Activated B cell treated with CpG ODN at 0.5 μM for 24 hours (primary cell): ENCODE measurements at regions of chr10 and their contacts with region 1.

Region 1: GRCh38 chr10:91251430-91252056 is 31.1 kb downstream of the PCGF5 start:
- DNase-seq: no peak
- ATAC-seq: peak; percentile 82
- H3K4me3 Mint-ChIP-seq: no peak overlapping the region
- H3K27ac Mint-ChIP-seq: no peak overlapping the region
- H3K4me1 Mint-ChIP-seq: peaks cover 4% of the 10 kb centered on the region
- H3K27me3 Mint-ChIP-seq: no peaks in the 10 kb centered on the region
- CTCF ChIP-seq: peak; percentile 97

Region 2: GRCh38 chr10:90751107-90751997 is 500.2 kb before region 1 on chr10:
- CTCF ChIA-PET with region 1: no interaction called
- POLR2A ChIA-PET with region 1: no interaction called
- intact Hi-C with region 1: loop called (anchors 2 kb)
- DNase-seq: no peak
- ATAC-seq: peak; percentile 54
- H3K4me3 Mint-ChIP-seq: no peak overlapping the region
- H3K27ac Mint-ChIP-seq: no peak overlapping the region
- H3K4me1 Mint-ChIP-seq: peaks cover 5% of the 10 kb centered on the region
- H3K27me3 Mint-ChIP-seq: peaks cover 13% of the 10 kb centered on the region
- CTCF ChIP-seq: no peak

Region 3: GRCh38 chr10:90885176-90885575 is 366.4 kb before region 1 on chr10:
- CTCF ChIA-PET with region 1: interaction called, 12 read pairs
- POLR2A ChIA-PET with region 1: no interaction called
- intact Hi-C with region 1: loop called (anchors 1 kb)
- DNase-seq: no peak
- ATAC-seq: no peak
- H3K4me3 Mint-ChIP-seq: no peak overlapping the region
- H3K27ac Mint-ChIP-seq: no peak overlapping the region
- H3K4me1 Mint-ChIP-seq: no peaks in the 10 kb centered on the region
- H3K27me3 Mint-ChIP-seq: no peaks in the 10 kb centered on the region
- CTCF ChIP-seq: no peak

Region 4: GRCh38 chr10:90999512-91000172 is 251.9 kb before region 1 on chr10:
- CTCF ChIA-PET with region 1: interaction called, 14 read pairs
- POLR2A ChIA-PET with region 1: interaction called, 3 read pairs
- intact Hi-C with region 1: no loop called
- DNase-seq: no peak
- ATAC-seq: peak; percentile 80
- H3K4me3 Mint-ChIP-seq: peak overlapping the region; percentile 56
- H3K27ac Mint-ChIP-seq: peak overlapping the region; percentile 93
- H3K4me1 Mint-ChIP-seq: peaks cover 63% of the 10 kb centered on the region
- H3K27me3 Mint-ChIP-seq: no peaks in the 10 kb centered on the region
- CTCF ChIP-seq: no peak

Region 5: DNA sequence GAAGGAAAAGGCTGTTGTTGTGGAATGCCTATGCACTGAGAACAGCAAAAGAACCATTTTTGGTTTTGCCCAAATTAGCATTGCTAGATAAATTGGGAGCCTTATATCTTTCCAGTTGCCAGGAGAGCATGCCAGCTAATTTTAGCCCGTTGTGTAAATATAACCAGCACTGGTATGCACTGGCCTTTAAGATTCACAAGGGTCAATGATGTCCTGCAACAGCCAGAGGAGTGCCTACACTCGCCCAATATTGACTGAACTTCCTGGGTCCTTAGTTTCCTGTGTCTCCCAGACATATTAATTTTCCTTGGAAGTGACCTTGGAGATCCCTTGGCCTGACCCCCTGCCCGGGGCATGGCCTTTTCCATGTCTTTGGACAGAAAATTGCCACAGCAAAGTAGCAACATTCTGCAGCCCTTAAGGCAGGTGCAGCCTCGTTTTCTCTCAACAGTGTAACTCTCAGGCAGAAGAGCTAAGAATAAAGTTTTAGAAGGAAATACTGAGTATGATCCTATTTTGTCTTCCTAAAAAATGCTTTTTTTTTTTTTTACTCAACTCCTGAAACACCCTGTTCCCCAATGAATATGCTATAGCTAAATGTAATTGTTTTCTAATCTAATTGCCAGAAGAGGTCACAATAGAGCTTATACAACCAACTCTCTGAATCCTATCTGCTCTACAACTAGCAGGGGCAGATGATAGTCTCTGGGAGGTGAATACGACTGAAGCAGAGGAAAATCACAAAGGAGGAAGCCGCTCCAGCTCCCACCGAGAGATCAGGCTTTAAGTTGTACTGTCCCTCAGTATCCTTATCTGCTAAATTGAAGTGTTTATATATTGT is 163.0 kb before region 1 on chr10:
- CTCF ChIA-PET with region 1: interaction called, 103 read pairs
- POLR2A ChIA-PET with region 1: interaction called, 9 read pairs
- intact Hi-C with region 1: loop called (anchors 1 kb)
- DNase-seq: no peak
- ATAC-seq: peak; percentile 69
- H3K4me3 Mint-ChIP-seq: no peak overlapping the region
- H3K27ac Mint-ChIP-seq: no peak overlapping the region
- H3K4me1 Mint-ChIP-seq: peaks cover 6% of the 10 kb centered on the region
- H3K27me3 Mint-ChIP-seq: no peaks in the 10 kb centered on the region
- CTCF ChIP-seq: no peak